Activated naive CD4-positive, alpha-beta T cell treated with anti-CD3 and anti-CD28 coated beads for 36 hours (primary cell): ENCODE measurements at regions of chr10 and their contacts with region 1.

Region 1: GRCh38 chr10:86376852-86377796 is 10.5 kb upstream of the GRID1 start:
- DNase-seq: peak; percentile 81
- H3K4me3 Mint-ChIP-seq: no peak overlapping the region
- H3K27ac Mint-ChIP-seq: no peak overlapping the region
- H3K4me1 Mint-ChIP-seq: peaks cover 2% of the 10 kb centered on the region
- H3K27me3 Mint-ChIP-seq: peaks cover 23% of the 10 kb centered on the region

Region 2: GRCh38 chr10:85786401-85786899 is 590.7 kb before region 1 on chr10:
- CTCF ChIA-PET with region 1: no interaction called
- intact Hi-C with region 1: loop called (anchors 2 kb)
- DNase-seq: peak; percentile 28
- H3K4me3 Mint-ChIP-seq: no peak overlapping the region
- H3K27ac Mint-ChIP-seq: no peak overlapping the region
- H3K4me1 Mint-ChIP-seq: no peaks in the 10 kb centered on the region
- H3K27me3 Mint-ChIP-seq: peaks cover 5% of the 10 kb centered on the region

Region 3: DNA sequence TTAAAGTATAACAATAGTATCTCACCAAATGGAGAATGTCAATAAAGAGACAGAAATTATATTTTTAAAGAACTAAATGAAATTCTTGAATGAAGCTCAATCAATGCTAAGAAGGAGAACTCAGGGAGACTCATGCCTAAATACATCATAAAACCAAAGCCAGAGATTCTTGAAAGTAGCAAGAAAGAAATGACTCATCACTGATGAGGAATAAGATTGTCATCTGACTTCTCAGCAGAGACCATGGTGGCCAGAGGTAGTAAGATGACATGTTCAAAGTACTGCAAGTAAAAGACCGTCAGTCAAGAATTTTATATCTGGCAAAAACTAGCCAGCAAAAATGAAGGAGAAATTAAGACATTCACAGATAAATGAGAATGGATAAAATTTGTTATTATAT is 409.5 kb before region 1 on chr10:
- CTCF ChIA-PET with region 1: no interaction called
- intact Hi-C with region 1: no loop called
- DNase-seq: no peak
- H3K4me3 Mint-ChIP-seq: no peak overlapping the region
- H3K27ac Mint-ChIP-seq: no peak overlapping the region
- H3K4me1 Mint-ChIP-seq: no peaks in the 10 kb centered on the region
- H3K27me3 Mint-ChIP-seq: peaks cover 21% of the 10 kb centered on the region

Region 4: GRCh38 chr10:86061278-86062197 is 315.6 kb before region 1 on chr10:
- CTCF ChIA-PET with region 1: no interaction called
- intact Hi-C with region 1: no loop called
- DNase-seq: no peak
- H3K4me3 Mint-ChIP-seq: no peak overlapping the region
- H3K27ac Mint-ChIP-seq: no peak overlapping the region
- H3K4me1 Mint-ChIP-seq: no peaks in the 10 kb centered on the region
- H3K27me3 Mint-ChIP-seq: peaks cover 13% of the 10 kb centered on the region

Region 5: DNA sequence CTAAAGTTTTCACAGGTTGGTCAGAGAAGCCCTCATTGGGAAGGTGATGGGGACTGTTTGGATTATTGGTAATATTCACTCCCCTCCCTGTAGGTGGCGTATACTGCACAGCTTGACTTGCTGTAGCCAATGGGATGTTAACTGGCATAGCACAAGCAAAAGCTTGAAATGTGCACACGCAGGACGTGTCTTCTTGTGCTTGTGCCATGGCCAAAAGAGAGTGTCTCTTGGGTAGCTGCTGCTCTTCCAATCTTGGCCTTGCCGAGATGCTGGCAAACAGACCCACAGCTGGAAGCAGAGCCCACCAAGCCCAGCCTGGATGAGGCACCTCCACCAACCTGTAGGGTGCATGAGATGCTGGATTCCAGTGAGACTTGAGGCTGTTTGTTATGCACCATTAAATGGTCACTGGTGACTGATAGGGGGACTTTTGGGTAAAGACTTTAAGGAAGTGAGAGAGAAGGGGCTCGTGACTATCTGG is 276.5 kb before region 1 on chr10:
- CTCF ChIA-PET with region 1: no interaction called
- intact Hi-C with region 1: loop called (anchors 1 kb)
- DNase-seq: no peak
- H3K4me3 Mint-ChIP-seq: no peak overlapping the region
- H3K27ac Mint-ChIP-seq: no peak overlapping the region
- H3K4me1 Mint-ChIP-seq: no peaks in the 10 kb centered on the region
- H3K27me3 Mint-ChIP-seq: peaks cover 2% of the 10 kb centered on the region

Region 6: GRCh38 chr10:86261941-86262687 is 115.0 kb before region 1 on chr10:
- CTCF ChIA-PET with region 1: no interaction called
- intact Hi-C with region 1: loop called (anchors 1 kb)
- DNase-seq: peak; percentile 40
- H3K4me3 Mint-ChIP-seq: no peak overlapping the region
- H3K27ac Mint-ChIP-seq: no peak overlapping the region
- H3K4me1 Mint-ChIP-seq: no peaks in the 10 kb centered on the region
- H3K27me3 Mint-ChIP-seq: peaks cover 19% of the 10 kb centered on the region

Region 7: GRCh38 chr10:86411281-86411841 is 34.2 kb after region 1 on chr10:
- CTCF ChIA-PET with region 1: no interaction called
- intact Hi-C with region 1: no loop called
- DNase-seq: peak; percentile 68
- H3K4me3 Mint-ChIP-seq: peak overlapping the region; percentile 60
- H3K27ac Mint-ChIP-seq: peak overlapping the region; percentile 85
- H3K4me1 Mint-ChIP-seq: peaks cover 45% of the 10 kb centered on the region
- H3K27me3 Mint-ChIP-seq: no peaks in the 10 kb centered on the region